Common myeloid progenitor, CD34-positive (primary cell): ENCODE measurements at regions of chr4 and their contacts with region 1.

Region 1: GRCh38 chr4:26459054-26459755 is 31.1 kb downstream of the CCKAR start:
- DNase-seq: peak; percentile 60 to 79 (median 78)
- H3K4me3 ChIP-seq: peak overlapping the region in 2 of 7 experiments; percentile 17 to 39
- H3K27ac ChIP-seq: no peak overlapping the region
- H3K4me1 ChIP-seq: peaks cover 9 to 19% (median 16%) of the 10 kb centered on the region in 4 experiments
- H3K27me3 ChIP-seq: no peaks in the 10 kb centered on the region

Region 2: GRCh38 chr4:26489101-26489985 is 30.1 kb after region 1 on chr4:
- CTCF ChIA-PET with region 1: no interaction called
- POLR2A ChIA-PET with region 1: no interaction called
- DNase-seq: no peak
- H3K4me3 ChIP-seq: no peak overlapping the region
- H3K27ac ChIP-seq: no peak overlapping the region
- H3K4me1 ChIP-seq: no peaks in the 10 kb centered on the region
- H3K27me3 ChIP-seq: peaks cover 0 to 13% (median 2%) of the 10 kb centered on the region in 5 experiments

Region 3: GRCh38 chr4:26576231-26576739 is 117.1 kb after region 1 on chr4:
- CTCF ChIA-PET with region 1: no interaction called
- POLR2A ChIA-PET with region 1: no interaction called
- DNase-seq: no peak
- H3K4me3 ChIP-seq: no peak overlapping the region
- H3K27ac ChIP-seq: no peak overlapping the region
- H3K4me1 ChIP-seq: no peaks in the 10 kb centered on the region
- H3K27me3 ChIP-seq: no peaks in the 10 kb centered on the region

Region 4: GRCh38 chr4:26719954-26720552 is 260.8 kb after region 1 on chr4:
- CTCF ChIA-PET with region 1: interaction called, 11 read pairs
- POLR2A ChIA-PET with region 1: no interaction called
- DNase-seq: peak in 2 of 3 donors; percentile 9 to 19
- H3K4me3 ChIP-seq: no peak overlapping the region
- H3K27ac ChIP-seq: no peak overlapping the region
- H3K4me1 ChIP-seq: peaks cover 0 to 3% (median 0%) of the 10 kb centered on the region in 4 experiments
- H3K27me3 ChIP-seq: no peaks in the 10 kb centered on the region

Region 5: DNA sequence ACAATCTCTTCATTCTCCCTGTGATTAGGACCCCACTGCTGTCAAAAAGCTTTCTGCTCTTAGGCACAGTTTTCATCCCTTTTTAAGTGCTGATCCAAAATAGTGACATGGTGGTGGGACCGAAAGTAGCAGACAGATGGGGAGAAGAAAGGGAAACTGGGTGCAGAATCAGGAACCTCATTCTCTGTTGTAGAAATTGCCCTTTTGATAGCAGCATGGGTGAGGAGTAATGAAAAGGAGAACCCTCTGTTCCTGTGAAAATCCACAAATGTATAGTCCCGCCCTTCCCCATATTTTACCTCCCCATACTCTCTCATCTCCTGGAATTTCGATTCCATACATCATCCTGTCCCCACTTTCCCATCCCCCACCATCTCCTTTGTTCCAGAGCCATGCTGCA is 528.0 kb after region 1 on chr4:
- CTCF ChIA-PET with region 1: no interaction called
- POLR2A ChIA-PET with region 1: no interaction called
- DNase-seq: peak in 1 of 3 donors; percentile 7
- H3K4me3 ChIP-seq: no peak overlapping the region
- H3K27ac ChIP-seq: no peak overlapping the region
- H3K4me1 ChIP-seq: peaks cover 2 to 23% (median 6%) of the 10 kb centered on the region in 4 experiments
- H3K27me3 ChIP-seq: no peaks in the 10 kb centered on the region

Region 6: GRCh38 chr4:27000820-27001219 is 541.6 kb after region 1 on chr4:
- CTCF ChIA-PET with region 1: interaction called, 16 read pairs
- POLR2A ChIA-PET with region 1: no interaction called
- DNase-seq: peak; percentile 15 to 55 (median 50)
- H3K4me3 ChIP-seq: no peak overlapping the region
- H3K27ac ChIP-seq: no peak overlapping the region
- H3K4me1 ChIP-seq: peaks cover 2 to 12% (median 6%) of the 10 kb centered on the region in 4 experiments
- H3K27me3 ChIP-seq: no peaks in the 10 kb centered on the region